Right cardiac atrium (tissue), 5 donors: ENCODE measurements at regions of chr9 and their contacts with region 1.

Region 1: DNA sequence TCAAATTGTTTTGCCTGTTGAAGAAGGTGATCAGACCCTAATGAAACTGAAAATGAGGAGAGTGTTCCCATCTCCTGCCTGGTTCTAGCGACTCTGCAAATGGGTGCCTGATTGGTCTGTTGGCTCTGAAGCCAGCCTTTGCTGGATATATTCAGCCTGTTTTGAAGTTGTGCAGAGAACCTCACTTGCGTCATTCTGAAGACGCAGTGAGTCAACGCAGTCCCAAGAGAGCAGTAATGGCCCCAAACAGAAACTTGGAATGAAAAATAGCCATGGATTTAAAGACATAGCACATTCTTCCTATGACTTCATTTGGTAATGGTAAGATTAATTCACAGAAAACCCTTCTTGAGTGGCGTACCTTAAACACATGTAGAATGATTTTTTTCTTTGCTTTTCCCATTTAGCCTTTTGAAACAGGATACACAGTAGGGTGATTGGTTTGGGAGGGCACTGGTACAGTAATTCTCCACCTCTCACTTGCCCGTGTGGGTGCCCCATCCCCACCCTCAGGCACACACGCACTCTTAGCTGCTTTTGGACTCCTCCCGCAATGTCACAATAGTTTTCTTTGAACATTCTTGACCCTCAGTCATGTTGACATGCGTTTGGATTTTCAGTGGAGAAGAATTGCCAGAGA is 54.1 kb upstream of the ABL1 start:
- DNase-seq: peak; percentile 73 to 83 (median 74)
- ATAC-seq: peak; percentile 93
- H3K4me3 ChIP-seq: no peak overlapping the region
- H3K27ac ChIP-seq: peak overlapping the region; percentile 86
- H3K4me1 ChIP-seq: peaks cover 9% of the 10 kb centered on the region
- H3K27me3 ChIP-seq: no peaks in the 10 kb centered on the region

Region 2: DNA sequence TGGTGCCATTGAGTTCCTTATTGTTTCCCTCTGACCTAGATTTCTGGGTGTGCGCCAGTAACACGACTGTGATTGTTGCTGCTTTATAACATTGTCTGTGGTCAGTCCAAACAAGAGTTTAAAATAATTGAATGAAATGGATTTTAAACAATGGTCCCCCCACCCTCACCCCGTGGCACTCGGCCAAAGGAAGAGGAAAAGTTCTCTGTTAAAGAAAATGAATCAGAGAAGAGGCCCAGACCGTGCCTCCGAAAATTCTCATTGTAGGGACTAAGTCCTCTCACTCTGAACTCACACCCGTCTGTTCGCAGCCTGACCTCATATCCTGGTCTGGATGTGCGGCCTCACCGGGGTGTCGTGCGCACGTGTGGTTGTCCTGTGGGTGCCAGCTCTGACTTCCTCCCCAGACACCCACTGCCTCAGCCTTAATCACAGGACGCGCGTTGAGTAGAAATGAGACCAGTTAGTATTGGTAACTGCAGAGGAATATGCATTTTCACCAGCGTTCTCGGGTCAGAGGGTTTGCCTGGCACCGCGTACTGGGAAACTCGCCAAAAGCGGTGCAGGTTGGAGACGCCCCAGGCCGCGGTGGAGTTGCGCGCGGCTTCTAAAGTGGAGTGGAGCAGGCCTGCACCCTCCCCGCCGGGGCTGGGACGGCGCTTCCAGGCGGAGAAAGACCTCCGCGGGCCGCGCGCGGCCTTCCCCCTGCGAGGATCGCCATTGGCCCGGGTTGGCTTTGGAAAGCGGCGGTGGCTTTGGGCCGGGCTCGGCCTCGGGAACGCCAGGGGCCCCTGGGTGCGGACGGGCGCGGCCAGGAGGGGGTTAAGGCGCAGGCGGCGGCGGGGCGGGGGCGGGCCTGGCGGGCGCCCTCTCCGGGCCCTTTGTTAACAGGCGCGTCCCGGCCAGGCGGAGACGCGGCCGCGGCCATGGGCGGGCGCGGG is 53.7 kb after region 1 on chr9 and contains the start of gene ABL1:
- intact Hi-C with region 1: loop called in 1 of 4 experiments (anchors 5 kb)
- DNase-seq: peak; percentile 76 to 91 (median 90)
- ATAC-seq: peak; percentile 89 to 90
- H3K4me3 ChIP-seq: peak within 1 kb of the TSS; percentile 78
- H3K27ac ChIP-seq: peak within 1 kb of the TSS; percentile 93
- H3K4me1 ChIP-seq: peaks cover 7% of the 10 kb centered on the region
- H3K27me3 ChIP-seq: no peaks in the 10 kb centered on the region
- total RNA-seq, gene ABL1: 32.9 to 48.2 (median 41.9) TPM

Region 3: DNA sequence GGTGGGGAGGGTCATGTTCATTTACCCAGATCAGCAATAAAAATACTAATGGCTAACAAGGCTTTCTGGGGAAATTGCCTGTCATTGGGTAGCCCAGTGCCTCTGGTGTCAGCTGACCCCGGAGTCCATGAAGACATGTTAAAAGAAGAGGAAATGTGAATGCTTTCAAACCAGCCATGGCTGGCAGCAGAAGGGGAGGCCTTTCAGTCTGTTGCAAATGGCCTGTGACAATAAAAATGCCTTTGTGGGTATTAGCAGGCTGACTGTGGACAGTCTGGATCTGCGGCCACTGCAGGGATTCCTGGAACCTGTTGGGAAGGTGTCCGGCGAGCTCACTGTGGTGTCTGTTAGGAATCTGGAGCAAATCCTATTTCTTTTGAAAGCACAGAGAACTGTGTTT is 61.6 kb after region 1 on chr9:
- intact Hi-C with region 1: loop called in 1 of 4 experiments (anchors 5 kb)
- DNase-seq: no peak
- ATAC-seq: no peak
- H3K4me3 ChIP-seq: no peak overlapping the region
- H3K27ac ChIP-seq: no peak overlapping the region
- H3K4me1 ChIP-seq: peaks cover 29% of the 10 kb centered on the region
- H3K27me3 ChIP-seq: no peaks in the 10 kb centered on the region

Region 4: GRCh38 chr9:131024978-131025868 is 244.2 kb after region 1 on chr9:
- intact Hi-C with region 1: no loop called
- DNase-seq: peak in 1 of 3 donors; percentile 22
- ATAC-seq: no peak
- H3K4me3 ChIP-seq: no peak overlapping the region
- H3K27ac ChIP-seq: no peak overlapping the region
- H3K4me1 ChIP-seq: no peaks in the 10 kb centered on the region
- H3K27me3 ChIP-seq: no peaks in the 10 kb centered on the region